Activated CD8-positive, alpha-beta T cell treated with anti-CD3 and anti-CD28 coated beads for 36 hours (primary cell): ENCODE measurements at regions of chr2 and their contacts with region 1.

Region 1: DNA sequence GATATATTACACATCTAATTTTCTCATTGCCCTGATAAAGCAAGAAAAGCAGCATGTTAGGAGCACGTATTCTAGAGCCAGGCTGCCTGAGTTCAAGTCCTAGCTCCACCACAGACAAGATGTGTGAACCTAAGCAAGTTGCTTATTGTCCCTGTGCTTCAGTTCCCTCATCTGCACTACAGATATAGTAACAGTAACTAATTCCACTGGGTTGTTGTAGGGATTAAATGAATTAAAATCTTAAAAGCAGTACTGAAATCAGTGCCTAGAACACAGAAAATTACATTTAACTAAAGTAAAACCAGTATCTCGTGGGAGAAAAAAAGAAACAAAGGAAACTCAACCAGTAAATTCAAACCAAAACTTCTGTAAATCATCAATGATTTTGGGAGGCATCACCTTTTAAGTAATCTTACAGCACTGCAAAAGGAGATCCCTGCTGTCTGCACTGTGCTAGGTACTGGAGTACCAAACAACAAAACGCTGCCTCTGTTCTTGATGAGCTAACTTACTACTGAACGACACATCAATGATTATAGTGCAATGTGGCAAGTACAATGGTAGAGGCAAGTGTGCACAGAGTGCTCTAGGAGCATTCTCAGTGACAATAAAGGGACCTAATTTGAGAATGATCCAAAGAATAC is 7.9 kb downstream of the MAP3K2 start:
- DNase-seq: no peak
- ATAC-seq: peak; percentile 45
- H3K4me3 Mint-ChIP-seq: no peak overlapping the region
- H3K27ac Mint-ChIP-seq: peak overlapping the region; percentile 20
- H3K4me1 Mint-ChIP-seq: peaks cover 65% of the 10 kb centered on the region
- H3K27me3 Mint-ChIP-seq: no peaks in the 10 kb centered on the region
- CTCF ChIP-seq: no peak

Region 2: GRCh38 chr2:126886211-126886915 is 493.5 kb before region 1 on chr2:
- CTCF ChIA-PET with region 1: no interaction called
- POLR2A ChIA-PET with region 1: no interaction called
- intact Hi-C with region 1: no loop called
- DNase-seq: peak; percentile 76
- ATAC-seq: peak; percentile 95
- H3K4me3 Mint-ChIP-seq: no peak overlapping the region
- H3K27ac Mint-ChIP-seq: no peak overlapping the region
- H3K4me1 Mint-ChIP-seq: no peaks in the 10 kb centered on the region
- H3K27me3 Mint-ChIP-seq: peaks cover 13% of the 10 kb centered on the region
- CTCF ChIP-seq: peak; percentile 77

Region 3: GRCh38 chr2:127064642-127065250 is 315.1 kb before region 1 on chr2:
- CTCF ChIA-PET with region 1: no interaction called
- POLR2A ChIA-PET with region 1: no interaction called
- intact Hi-C with region 1: no loop called
- DNase-seq: peak; percentile 90
- ATAC-seq: peak; percentile 89
- H3K4me3 Mint-ChIP-seq: no peak overlapping the region
- H3K27ac Mint-ChIP-seq: peak overlapping the region; percentile 86
- H3K4me1 Mint-ChIP-seq: peaks cover 34% of the 10 kb centered on the region
- H3K27me3 Mint-ChIP-seq: no peaks in the 10 kb centered on the region
- CTCF ChIP-seq: no peak

Region 4: GRCh38 chr2:127365211-127365643 is 14.6 kb before region 1 on chr2:
- CTCF ChIA-PET with region 1: interaction called, 10 read pairs
- POLR2A ChIA-PET with region 1: interaction called, 3 read pairs
- intact Hi-C with region 1: no loop called
- DNase-seq: no peak
- ATAC-seq: peak; percentile 53
- H3K4me3 Mint-ChIP-seq: no peak overlapping the region
- H3K27ac Mint-ChIP-seq: peak overlapping the region; percentile 9
- H3K4me1 Mint-ChIP-seq: peaks cover 59% of the 10 kb centered on the region
- H3K27me3 Mint-ChIP-seq: no peaks in the 10 kb centered on the region
- CTCF ChIP-seq: no peak